MCF 10A (cell line): ENCODE measurements at regions of chr9 and their contacts with region 1.

Region 1: DNA sequence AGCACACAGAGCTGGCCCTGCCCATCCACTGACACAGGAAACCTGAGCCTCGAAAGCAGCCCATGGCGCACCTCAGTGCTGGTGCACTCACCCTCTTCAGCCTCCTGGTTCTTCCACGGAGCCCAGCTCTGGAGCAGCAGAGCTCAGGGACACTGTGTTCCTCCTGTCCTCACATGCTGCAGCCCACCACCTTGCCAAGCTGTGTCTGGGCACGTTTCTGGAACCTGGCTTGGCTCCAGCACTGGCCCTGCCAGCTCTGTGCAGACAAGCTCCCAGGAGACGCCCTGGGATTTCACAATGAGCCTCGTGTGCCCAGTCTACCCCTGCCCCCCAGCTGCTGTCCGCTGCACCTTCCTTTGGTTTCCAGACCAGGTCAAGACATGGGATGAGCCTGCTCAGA is 119.5 kb downstream of the SYK start:
- DNase-seq: peak; percentile 98
- H3K4me3 Mint-ChIP-seq: peak overlapping the region; percentile 26
- H3K27ac Mint-ChIP-seq: peak overlapping the region; percentile 83
- H3K4me1 Mint-ChIP-seq: peaks cover 55% of the 10 kb centered on the region
- H3K27me3 Mint-ChIP-seq: no peaks in the 10 kb centered on the region
- CTCF ChIP-seq: no peak

Region 2: GRCh38 chr9:90942555-90942954 is 21.4 kb after region 1 on chr9:
- CTCF ChIA-PET with region 1: interaction called, 11 read pairs
- POLR2A ChIA-PET with region 1: interaction called, 36 read pairs
- intact Hi-C with region 1: no loop called
- DNase-seq: peak; percentile 93
- H3K4me3 Mint-ChIP-seq: no peak overlapping the region
- H3K27ac Mint-ChIP-seq: peak overlapping the region; percentile 24
- H3K4me1 Mint-ChIP-seq: peaks cover 22% of the 10 kb centered on the region
- H3K27me3 Mint-ChIP-seq: no peaks in the 10 kb centered on the region
- CTCF ChIP-seq: no peak

Region 3: GRCh38 chr9:90961356-90961755 is 40.2 kb after region 1 on chr9:
- CTCF ChIA-PET with region 1: interaction called, 3 read pairs
- POLR2A ChIA-PET with region 1: interaction called, 14 read pairs
- intact Hi-C with region 1: no loop called
- DNase-seq: peak; percentile 81
- H3K4me3 Mint-ChIP-seq: no peak overlapping the region
- H3K27ac Mint-ChIP-seq: peak overlapping the region; percentile 71
- H3K4me1 Mint-ChIP-seq: peaks cover 29% of the 10 kb centered on the region
- H3K27me3 Mint-ChIP-seq: no peaks in the 10 kb centered on the region
- CTCF ChIP-seq: no peak

Region 4: GRCh38 chr9:90972057-90972456 is 50.9 kb after region 1 on chr9:
- CTCF ChIA-PET with region 1: interaction called, 7 read pairs
- POLR2A ChIA-PET with region 1: interaction called, 22 read pairs
- intact Hi-C with region 1: loop called (anchors 5 kb)
- DNase-seq: no peak
- H3K4me3 Mint-ChIP-seq: no peak overlapping the region
- H3K27ac Mint-ChIP-seq: peak overlapping the region; percentile 46
- H3K4me1 Mint-ChIP-seq: peaks cover 34% of the 10 kb centered on the region
- H3K27me3 Mint-ChIP-seq: no peaks in the 10 kb centered on the region
- CTCF ChIP-seq: no peak

Region 5: DNA sequence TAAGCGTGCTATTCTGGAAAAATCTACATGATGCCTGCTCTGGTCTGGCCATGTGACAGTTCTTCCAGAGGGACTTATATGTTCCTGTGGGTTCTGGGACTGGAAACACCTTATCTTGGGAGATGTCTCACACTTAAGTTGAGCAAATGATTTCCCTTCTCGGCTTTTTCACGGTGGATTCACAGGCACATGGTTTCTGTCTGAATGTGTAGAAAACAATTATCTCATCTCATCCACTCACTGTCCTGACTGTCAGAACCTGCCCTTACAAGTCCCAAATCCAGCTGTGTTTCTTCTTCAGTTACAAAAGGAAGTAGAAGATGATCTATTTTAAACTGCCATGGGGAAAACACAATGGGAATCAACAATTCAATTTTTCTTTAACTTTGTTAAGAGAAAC is 64.5 kb after region 1 on chr9:
- CTCF ChIA-PET with region 1: interaction called, 26 read pairs
- POLR2A ChIA-PET with region 1: interaction called, 20 read pairs
- intact Hi-C with region 1: loop called (anchors 5 kb)
- DNase-seq: no peak
- H3K4me3 Mint-ChIP-seq: no peak overlapping the region
- H3K27ac Mint-ChIP-seq: peak overlapping the region; percentile 89
- H3K4me1 Mint-ChIP-seq: peaks cover 38% of the 10 kb centered on the region
- H3K27me3 Mint-ChIP-seq: no peaks in the 10 kb centered on the region
- CTCF ChIP-seq: no peak

Region 6: DNA sequence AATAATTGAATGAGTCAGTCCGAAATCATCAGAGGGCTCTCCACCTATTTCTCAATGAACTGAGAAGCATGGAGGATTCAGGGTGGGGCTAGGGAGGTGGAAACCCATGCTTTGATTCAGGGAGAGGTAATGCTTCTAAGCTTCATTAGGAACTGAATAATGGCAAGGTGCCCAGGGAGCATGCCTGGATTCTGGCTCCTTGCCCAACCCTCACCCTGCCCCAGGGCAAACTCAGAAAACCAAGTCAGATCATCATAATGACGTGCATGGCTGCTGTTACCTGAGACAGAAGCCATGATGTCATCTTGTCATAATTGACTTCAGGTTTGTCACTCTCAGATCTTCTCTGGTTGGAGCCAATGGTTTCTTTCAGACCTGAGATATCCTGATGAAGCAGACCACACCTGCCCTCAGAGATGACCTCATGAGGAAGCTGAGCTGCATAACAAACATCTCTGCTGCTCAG is 80.1 kb after region 1 on chr9:
- CTCF ChIA-PET with region 1: interaction called, 14 read pairs
- POLR2A ChIA-PET with region 1: interaction called, 26 read pairs
- intact Hi-C with region 1: no loop called
- DNase-seq: peak; percentile 99
- H3K4me3 Mint-ChIP-seq: no peak overlapping the region
- H3K27ac Mint-ChIP-seq: peak overlapping the region; percentile 88
- H3K4me1 Mint-ChIP-seq: peaks cover 36% of the 10 kb centered on the region
- H3K27me3 Mint-ChIP-seq: no peaks in the 10 kb centered on the region
- CTCF ChIP-seq: no peak

Region 7: GRCh38 chr9:91060503-91061343 is 139.6 kb after region 1 on chr9:
- CTCF ChIA-PET with region 1: interaction called, 7 read pairs
- POLR2A ChIA-PET with region 1: interaction called, 15 read pairs
- intact Hi-C with region 1: no loop called
- DNase-seq: peak; percentile 99
- H3K4me3 Mint-ChIP-seq: peak overlapping the region; percentile 63
- H3K27ac Mint-ChIP-seq: peak overlapping the region; percentile 98
- H3K4me1 Mint-ChIP-seq: peaks cover 45% of the 10 kb centered on the region
- H3K27me3 Mint-ChIP-seq: no peaks in the 10 kb centered on the region
- CTCF ChIP-seq: no peak